ENCODE measurements at regions of chr12 and their contacts with region 1.

Region 1: GRCh38 chr12:12334367-12335040 is 15.5 kb downstream of the MANSC1 start:
- DNase-seq: peak in 1 of 2 experiments; percentile 57
- H3K4me3 ChIP-seq: no peak overlapping the region
- H3K27ac ChIP-seq: no peak overlapping the region
- H3K4me1 ChIP-seq: peaks cover 44% of the 10 kb centered on the region
- H3K27me3 ChIP-seq: no peaks in the 10 kb centered on the region
- CTCF ChIP-seq: peak; percentile 89

Region 2: DNA sequence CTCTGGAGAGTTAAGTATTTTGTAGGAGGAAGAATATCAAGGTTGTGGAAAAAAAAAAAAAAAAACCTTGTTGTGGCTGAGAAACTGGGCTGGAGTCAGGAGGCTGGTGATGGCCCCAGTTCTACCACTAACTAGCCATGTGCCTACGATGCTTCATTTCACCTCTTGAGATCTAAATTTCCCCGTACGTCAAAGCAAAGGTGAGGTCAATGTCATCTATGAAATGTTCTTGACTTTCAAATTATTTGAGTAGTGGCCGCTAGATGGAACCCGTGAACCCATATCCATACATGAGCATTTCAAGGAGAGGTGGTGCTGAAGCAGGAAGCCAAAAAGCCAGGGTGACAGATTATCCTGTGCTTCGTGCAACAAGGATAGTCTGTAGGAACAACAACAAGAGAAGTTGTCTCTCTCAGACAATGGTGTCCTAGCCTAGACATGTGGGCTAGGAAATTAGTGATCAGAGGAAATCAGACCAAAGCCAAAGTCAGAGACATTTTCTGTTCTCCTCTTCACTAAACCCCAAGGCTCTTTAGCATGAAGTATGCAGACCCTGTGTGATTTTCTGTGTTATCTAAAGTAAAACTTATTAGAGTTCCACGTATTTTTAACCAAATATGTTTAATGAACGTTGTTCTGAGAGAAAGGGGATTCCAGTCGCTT is 780.5 kb before region 1 on chr12:
- CTCF ChIA-PET with region 1: interaction called, 6 read pairs
- POLR2A ChIA-PET with region 1: interaction called, 5 read pairs
- intact Hi-C with region 1: loop called (anchors 5 kb)
- DNase-seq: peak; percentile 54 to 61
- H3K4me3 ChIP-seq: no peak overlapping the region
- H3K27ac ChIP-seq: no peak overlapping the region
- H3K4me1 ChIP-seq: peaks cover 21% of the 10 kb centered on the region; the same call in 1 of the 2 replicates
- H3K27me3 ChIP-seq: no peaks in the 10 kb centered on the region
- CTCF ChIP-seq: peak; percentile 79

Region 3: DNA sequence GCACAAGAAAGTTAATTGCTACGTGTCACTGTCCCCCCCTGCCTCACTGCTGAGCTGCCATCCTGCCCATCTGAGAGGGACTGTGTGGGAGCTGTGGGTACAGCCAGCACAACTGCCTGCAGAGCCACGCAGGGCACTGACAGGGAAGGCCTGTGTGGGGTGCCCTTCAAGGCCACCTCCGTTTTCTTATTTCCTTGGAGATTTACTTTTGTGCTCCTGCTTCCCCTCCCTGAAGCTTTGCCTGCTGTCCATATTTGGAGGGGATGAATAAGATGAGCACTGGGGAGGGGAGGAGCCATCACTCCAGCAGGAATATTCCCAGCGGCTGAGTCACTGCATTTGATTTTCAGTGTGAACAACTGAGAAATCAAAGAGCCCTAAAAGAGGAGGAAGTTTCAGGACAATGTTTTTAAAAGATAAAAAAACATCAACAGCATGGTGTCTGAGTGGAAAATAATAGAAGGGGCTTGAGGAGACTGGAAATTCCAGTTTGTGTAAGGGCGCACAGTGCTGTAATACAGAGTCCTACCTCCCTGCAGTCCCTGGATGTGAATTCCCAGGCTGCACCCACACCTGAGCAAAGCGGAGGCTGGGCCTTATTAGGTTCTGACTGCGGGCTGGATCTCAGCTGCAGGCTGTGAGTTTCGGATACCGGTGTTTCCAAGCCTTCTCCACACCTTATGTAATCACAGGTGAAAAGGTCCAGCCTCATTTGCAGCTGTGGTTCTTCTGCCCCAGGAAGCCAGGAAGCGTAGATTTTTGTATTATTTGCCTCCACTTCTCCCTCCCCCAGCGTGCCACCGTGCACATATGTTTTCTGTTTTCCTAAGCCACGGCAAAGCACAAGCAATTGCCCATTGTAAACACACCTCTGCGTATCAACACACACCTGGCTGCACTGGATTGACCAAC is 456.4 kb before region 1 on chr12:
- CTCF ChIA-PET with region 1: no interaction called
- POLR2A ChIA-PET with region 1: no interaction called
- intact Hi-C with region 1: loop called (anchors 5 kb)
- DNase-seq: peak; percentile 85 to 93
- H3K4me3 ChIP-seq: peak overlapping the region; percentile 45; the same call in 1 of the 2 replicates
- H3K27ac ChIP-seq: peak overlapping the region; percentile 96
- H3K4me1 ChIP-seq: peaks cover 64% of the 10 kb centered on the region
- H3K27me3 ChIP-seq: no peaks in the 10 kb centered on the region
- CTCF ChIP-seq: no peak

Region 4: DNA sequence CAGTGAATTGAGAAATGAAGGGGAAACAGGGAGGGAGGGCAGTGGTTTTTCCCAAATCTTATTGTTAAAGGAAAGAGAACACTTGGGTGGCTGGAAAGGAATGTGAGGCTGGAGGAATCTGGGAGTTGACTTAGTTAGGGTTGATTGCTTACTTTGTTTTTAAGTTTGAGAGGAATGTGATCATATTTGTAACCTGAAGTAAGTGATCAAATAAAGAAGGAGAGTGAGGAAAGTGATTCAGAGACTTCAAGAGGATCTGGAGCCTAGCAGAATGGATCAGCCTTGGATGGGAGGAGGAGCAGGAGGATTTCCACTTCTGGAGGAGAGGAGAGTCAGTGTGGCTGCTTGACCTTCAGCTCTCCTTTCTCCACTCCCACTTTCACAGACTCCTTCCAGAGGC is 61.6 kb before region 1 on chr12:
- CTCF ChIA-PET with region 1: no interaction called
- POLR2A ChIA-PET with region 1: interaction called, 14 read pairs
- intact Hi-C with region 1: no loop called
- DNase-seq: peak; percentile 11 to 46
- H3K4me3 ChIP-seq: no peak overlapping the region
- H3K27ac ChIP-seq: no peak overlapping the region
- H3K4me1 ChIP-seq: peaks cover 19% of the 10 kb centered on the region; the same call in 1 of the 2 replicates
- H3K27me3 ChIP-seq: no peaks in the 10 kb centered on the region
- CTCF ChIP-seq: no peak

Region 5: DNA sequence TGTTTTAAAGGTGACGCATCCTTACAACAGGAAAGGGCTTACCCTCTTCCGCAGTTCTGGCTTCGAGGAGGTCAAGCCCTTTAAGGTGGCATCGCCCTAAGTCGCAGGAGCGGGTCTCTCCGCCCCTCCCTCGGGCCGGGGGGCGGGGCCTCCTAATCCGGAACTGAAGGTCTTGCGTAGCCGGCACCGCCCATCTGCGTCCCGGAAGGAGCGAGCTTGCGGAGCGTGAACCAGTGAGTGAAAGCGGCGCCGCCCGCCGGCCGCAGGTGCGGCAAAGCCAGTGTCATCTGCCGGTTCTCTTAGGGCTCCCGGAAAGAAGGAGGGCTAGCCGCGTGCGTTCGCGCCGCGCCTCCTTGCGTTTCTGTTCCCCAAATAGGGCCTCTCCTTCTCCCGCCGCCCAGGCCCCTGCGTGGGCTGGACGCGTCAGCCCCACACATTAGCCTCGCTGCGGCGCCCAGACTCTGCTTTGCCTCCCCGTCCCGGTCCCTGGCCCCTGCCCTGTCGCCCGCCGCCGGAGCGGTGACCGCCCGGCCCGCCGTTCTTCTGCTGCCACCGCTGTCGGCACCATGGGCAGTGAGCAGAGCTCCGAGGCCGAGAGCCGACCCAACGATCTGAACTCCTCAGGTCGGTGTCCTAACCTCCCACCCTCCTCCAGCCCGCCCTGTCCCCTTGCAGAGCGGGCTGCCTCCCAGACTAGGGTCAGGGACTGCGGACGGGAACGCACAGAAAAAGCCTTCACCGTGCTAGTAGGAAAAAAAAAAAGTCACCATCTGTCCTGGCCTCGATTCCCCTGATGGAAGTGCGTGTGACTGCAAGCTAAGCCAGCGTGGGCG is 22.6 kb after region 1 on chr12 and contains the start of gene BORCS5:
- CTCF ChIA-PET with region 1: interaction called, 4 read pairs
- POLR2A ChIA-PET with region 1: interaction called, 5 read pairs
- intact Hi-C with region 1: loop called (anchors 2 kb)
- DNase-seq: peak; percentile 94 to 99
- H3K4me3 ChIP-seq: peak within 1 kb of the TSS; percentile 70
- H3K27ac ChIP-seq: peak within 1 kb of the TSS; percentile 73
- H3K4me1 ChIP-seq: peaks cover 19% of the 10 kb centered on the region
- H3K27me3 ChIP-seq: no peaks in the 10 kb centered on the region
- CTCF ChIP-seq: no peak
- total RNA-seq, gene BORCS5: 18.2 and 19.7 TPM in 2 replicates

Region 6: DNA sequence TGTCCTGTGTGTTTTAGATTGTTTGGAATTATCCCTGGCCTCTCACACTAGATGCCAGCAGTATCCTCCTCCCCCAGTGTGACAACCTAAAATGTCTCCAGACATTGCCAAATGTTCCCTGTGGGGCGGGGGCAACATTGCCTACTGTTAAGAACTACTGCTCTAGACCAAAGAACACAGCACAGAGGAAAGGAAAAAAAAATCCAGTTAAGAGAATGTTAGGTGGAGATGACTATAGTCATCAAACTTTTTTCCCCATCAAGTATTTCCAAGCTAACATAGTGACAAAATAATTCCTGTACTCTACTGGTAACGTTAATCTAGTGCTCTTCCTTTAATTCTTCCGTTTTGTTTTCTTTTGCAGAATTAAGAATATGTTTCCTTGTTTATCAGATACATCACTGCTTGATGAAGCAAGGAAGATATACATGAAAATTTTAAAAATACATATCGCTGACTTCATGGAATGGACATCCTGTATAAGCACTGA is 386.2 kb after region 1 on chr12:
- CTCF ChIA-PET with region 1: no interaction called
- POLR2A ChIA-PET with region 1: no interaction called
- intact Hi-C with region 1: no loop called
- DNase-seq: no peak
- H3K4me3 ChIP-seq: peak overlapping the region; percentile 96
- H3K27ac ChIP-seq: peak overlapping the region; percentile 98
- H3K4me1 ChIP-seq: peaks cover 43% of the 10 kb centered on the region
- H3K27me3 ChIP-seq: no peaks in the 10 kb centered on the region
- CTCF ChIP-seq: no peak

Measured in PC-9 (cell line).